Activated CD4-positive, alpha-beta memory T cell treated with anti-CD3 and anti-CD28 coated beads for 36 hours (primary cell): ENCODE measurements at regions of chr13 and their contacts with region 1.

Region 1: DNA sequence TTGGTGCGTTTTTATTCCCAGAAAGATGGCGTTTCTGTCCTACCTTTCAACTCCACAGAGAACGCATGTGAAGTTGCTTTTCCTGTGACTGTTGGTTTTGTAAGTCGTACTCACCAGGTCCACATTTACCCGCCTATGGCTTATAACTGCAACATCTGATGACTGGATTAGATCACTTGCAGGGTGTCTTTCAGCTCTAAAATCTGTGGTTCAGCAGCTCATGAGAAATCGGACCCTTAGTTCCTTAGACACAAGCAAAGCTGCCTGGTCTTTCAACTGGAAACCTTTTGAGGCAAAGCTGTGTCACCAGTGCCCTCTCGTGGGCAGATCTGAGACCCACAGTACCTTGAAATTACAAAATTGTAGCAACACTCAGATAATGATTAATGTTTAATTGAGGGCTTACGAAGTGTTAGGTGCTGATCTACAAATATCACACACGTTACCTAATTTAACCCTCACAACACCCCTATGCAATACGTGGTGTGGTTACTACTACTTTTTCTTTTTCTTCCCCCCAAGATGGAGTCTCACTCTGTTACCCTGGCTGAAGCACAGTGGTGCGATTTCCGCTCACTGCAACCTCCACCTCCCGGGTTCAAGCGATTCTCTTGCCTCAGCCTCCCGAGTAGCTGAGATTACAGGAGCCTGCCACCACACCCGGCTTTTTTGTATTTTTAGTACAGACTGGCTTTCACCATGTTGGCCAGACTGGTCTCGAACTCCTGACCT is 65.4 kb downstream of the RUBCNL start:
- DNase-seq: peak; percentile 83
- H3K4me3 Mint-ChIP-seq: peak overlapping the region; percentile 68
- H3K27ac Mint-ChIP-seq: peak overlapping the region; percentile 78
- H3K4me1 Mint-ChIP-seq: peaks cover 16% of the 10 kb centered on the region
- H3K27me3 Mint-ChIP-seq: peaks cover 2% of the 10 kb centered on the region

Region 2: DNA sequence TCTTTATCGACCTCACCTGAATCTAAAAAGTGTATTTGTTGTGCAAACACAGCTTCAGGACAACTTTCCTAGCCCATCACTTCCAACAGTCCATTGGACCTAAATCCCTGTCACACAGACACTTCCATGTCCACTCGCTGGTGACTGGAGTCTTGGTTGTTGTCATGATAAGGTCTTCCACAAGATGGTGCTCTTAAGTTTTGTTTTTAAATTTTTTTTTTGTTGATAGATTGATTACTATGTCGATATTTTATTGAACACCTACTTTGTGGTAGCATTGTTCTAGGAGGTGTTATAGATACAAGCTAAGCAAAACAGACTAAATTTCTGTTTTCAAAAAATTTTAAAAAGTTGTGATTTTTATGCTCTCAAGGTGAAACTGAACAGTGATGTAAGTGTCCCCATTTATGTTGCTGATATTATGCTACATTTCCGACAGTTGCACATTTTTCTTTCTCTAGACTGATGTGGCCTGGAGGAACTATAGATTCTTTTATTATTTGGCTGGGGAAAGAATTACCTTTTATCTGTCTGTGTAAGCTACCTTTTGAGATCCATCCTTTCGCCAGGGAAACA is 698.1 kb before region 1 on chr13:
- CTCF ChIA-PET with region 1: interaction called, 3 read pairs
- POLR2A ChIA-PET with region 1: no interaction called
- intact Hi-C with region 1: loop called (anchors 10 kb)
- DNase-seq: no peak
- H3K4me3 Mint-ChIP-seq: no peak overlapping the region
- H3K27ac Mint-ChIP-seq: no peak overlapping the region
- H3K4me1 Mint-ChIP-seq: no peaks in the 10 kb centered on the region
- H3K27me3 Mint-ChIP-seq: peaks cover 39% of the 10 kb centered on the region

Region 3: DNA sequence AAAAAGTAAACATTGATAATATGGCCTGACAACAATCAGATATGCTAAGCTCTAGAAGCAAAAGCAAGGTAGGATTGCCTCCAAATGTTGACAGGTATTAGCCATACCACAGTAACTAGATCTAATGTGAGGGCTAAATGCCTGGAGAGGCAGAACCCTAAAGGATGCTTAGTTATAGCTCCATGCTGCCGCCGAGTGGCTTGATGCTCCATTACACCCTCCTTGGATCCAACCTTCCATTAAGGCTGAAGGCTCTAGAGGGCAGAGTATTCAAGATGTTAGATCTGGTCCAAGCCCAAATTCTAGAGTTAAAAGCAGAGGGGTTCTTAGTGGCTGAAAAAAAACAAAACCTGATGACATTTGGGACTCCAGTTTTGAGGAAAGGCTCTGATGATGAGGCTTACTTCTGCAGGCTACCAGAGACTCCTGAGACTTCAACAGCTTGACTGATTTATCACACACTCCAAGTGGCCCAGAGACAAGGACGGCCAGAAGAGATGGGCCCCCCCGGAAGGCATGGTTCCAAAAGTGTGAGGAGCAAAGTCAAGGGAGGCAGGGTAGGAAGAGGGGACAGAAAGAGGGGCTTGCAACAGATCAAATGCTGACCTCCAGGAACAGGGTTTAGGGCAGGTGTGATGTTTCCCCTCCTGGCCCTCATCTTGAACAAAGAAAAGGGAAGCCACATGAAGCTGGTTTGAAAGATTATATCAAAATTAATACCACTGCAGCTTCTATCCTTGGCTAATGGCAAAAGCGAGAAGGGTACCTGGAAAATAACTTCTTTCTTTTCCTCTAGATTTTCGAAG is 194.9 kb before region 1 on chr13:
- CTCF ChIA-PET with region 1: interaction called, 13 read pairs
- POLR2A ChIA-PET with region 1: no interaction called
- intact Hi-C with region 1: loop called (anchors 1 kb)
- DNase-seq: peak; percentile 83
- H3K4me3 Mint-ChIP-seq: no peak overlapping the region
- H3K27ac Mint-ChIP-seq: peak overlapping the region; percentile 40
- H3K4me1 Mint-ChIP-seq: peaks cover 39% of the 10 kb centered on the region
- H3K27me3 Mint-ChIP-seq: no peaks in the 10 kb centered on the region

Region 4: GRCh38 chr13:46211483-46212351 is 109.9 kb before region 1 on chr13 and contains the start of gene LRRC63:
- CTCF ChIA-PET with region 1: no interaction called
- POLR2A ChIA-PET with region 1: no interaction called
- intact Hi-C with region 1: loop called (anchors 5 kb)
- DNase-seq: peak; percentile 89
- H3K4me3 Mint-ChIP-seq: peak within 1 kb of the TSS; percentile 85
- H3K27ac Mint-ChIP-seq: peak within 1 kb of the TSS; percentile 74
- H3K4me1 Mint-ChIP-seq: peaks cover 21% of the 10 kb centered on the region
- H3K27me3 Mint-ChIP-seq: no peaks in the 10 kb centered on the region
- total RNA-seq, gene LRRC63: 0.45 to 0.63 TPM

Region 5: DNA sequence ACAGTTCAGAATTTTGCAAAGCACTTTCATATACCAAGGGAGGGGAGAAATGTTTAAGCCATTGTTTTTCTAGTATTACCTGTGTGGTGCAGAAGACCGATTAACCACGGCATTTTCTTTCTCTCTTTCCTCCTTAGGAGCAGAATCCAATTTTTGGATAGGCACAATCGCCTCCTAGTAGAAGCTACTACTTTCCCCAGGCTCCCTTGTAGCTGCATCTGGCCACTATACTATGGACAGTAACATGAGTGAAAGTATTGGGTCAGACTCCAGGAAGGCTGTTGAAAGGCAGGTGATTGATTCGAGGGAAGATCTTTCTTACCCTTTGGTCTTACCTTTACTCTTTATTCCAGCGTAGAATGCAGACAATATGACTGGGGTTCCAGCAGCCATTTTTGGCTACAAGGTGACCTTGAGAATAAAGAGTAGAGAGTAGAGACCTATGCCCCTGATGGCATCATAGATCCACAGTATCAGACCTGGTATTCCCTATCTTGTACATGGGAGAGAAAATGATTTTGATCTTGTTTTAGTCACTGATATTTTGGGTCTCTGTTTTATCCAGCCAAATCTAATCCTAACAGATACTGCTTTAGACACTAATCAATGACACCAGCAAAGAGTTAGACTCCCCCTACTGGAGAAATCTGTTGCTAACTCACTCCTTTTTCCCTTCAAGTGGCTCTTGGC is 32.9 kb before region 1 on chr13:
- CTCF ChIA-PET with region 1: interaction called, 31 read pairs
- POLR2A ChIA-PET with region 1: interaction called, 3 read pairs
- intact Hi-C with region 1: loop called (anchors 5 kb)
- DNase-seq: no peak
- H3K4me3 Mint-ChIP-seq: no peak overlapping the region
- H3K27ac Mint-ChIP-seq: no peak overlapping the region
- H3K4me1 Mint-ChIP-seq: peaks cover 22% of the 10 kb centered on the region
- H3K27me3 Mint-ChIP-seq: no peaks in the 10 kb centered on the region